Left ventricle myocardium superior (tissue), 1 donor: ENCODE measurements at regions of chr14 and their contacts with region 1.

Region 1: GRCh38 chr14:49767562-49768300 is at the start of gene KLHDC2:
- DNase-seq: peak; percentile 95
- ATAC-seq: peak; percentile 96
- total RNA-seq, gene KLHDC2: 85.5 TPM

Region 2: DNA sequence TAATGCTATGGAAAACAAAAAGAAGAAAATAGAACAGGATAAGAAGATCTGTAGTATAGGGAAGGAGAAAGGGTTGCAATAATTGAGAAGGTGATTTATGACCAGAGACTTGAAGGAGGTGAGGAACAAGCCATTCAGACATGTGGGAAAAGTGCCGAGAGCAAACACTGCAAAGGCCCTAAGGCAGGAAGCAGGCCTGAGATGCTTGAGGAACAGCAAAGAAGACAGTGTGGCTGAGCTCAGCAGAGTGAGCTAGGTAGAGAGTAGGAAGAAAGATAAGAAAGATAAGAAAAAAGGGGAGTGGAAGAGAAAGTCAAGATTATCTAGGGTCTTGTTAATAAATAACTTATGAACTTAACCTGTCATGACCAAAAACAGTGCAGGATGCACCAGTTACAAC is 853.3 kb before region 1 on chr14:
- intact Hi-C with region 1: no loop called
- DNase-seq: no peak
- ATAC-seq: no peak

Region 3: GRCh38 chr14:49633640-49634546 is 133.8 kb before region 1 on chr14:
- intact Hi-C with region 1: loop called (anchors 10 kb)
- DNase-seq: peak; percentile 95
- ATAC-seq: peak; percentile 94